ENCODE measurements at regions of chr1 and their contacts with region 1.

Region 1: DNA sequence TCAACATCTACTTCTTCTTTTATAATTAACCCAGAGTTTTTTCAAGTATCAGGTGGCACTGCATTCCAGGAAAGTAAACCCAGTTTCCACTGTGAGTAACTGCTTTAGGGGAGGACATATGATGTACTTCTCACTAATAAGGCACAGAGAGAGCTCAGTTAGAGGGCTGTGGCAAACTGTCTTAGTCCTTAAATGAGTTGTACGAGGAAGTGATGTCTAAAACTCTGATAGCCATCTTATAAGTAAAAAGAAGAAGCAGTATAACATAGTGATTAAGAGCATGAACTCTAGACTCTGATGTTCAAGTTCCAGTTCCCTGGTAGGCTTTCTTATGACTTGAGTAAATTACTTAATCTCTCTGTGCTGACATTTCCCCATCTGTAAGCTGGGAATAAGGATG is 58.7 kb upstream of the PTGS2 start:
- DNase-seq: peak; percentile 10
- H3K4me3 Mint-ChIP-seq: no peak overlapping the region
- H3K27ac Mint-ChIP-seq: peak overlapping the region; percentile 26
- H3K4me1 Mint-ChIP-seq: peaks cover 21% of the 10 kb centered on the region
- H3K27me3 Mint-ChIP-seq: peaks cover 2% of the 10 kb centered on the region

Region 2: DNA sequence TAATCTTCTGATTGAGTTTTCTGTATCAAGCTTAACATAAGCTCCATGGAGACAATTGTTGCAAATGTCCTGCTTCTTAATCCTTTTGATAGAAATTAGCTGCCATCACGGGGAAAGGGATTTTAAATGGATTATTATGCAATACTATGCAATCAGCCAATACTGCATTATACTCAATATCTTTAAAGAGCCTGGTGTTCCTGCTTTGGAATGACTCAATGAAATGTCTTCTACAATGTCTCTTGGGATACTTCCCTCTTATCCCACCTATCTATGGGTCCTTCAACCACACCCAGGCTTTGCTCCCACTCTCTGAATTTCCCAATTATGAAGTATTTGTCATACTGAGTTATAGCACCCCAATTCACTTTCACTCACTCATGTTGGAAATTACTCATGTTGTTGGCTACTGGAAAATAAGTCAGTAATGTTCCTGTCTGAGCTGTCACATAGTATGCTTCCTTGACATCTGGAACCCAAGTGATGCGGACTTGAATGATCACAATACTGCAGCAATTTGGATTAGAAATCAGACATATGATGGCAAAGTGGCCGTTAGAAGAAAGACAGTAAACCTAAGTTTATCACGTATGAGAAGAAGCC is 448.9 kb before region 1 on chr1:
- CTCF ChIA-PET with region 1: no interaction called
- POLR2A ChIA-PET with region 1: no interaction called
- intact Hi-C with region 1: loop called (anchors 5 kb)
- DNase-seq: no peak
- H3K4me3 Mint-ChIP-seq: peak overlapping the region; percentile 24
- H3K27ac Mint-ChIP-seq: peak overlapping the region; percentile 92
- H3K4me1 Mint-ChIP-seq: peaks cover 65% of the 10 kb centered on the region
- H3K27me3 Mint-ChIP-seq: peaks cover 2% of the 10 kb centered on the region

Region 3: GRCh38 chr1:186442651-186443114 is 296.2 kb before region 1 on chr1:
- CTCF ChIA-PET with region 1: no interaction called
- POLR2A ChIA-PET with region 1: no interaction called
- intact Hi-C with region 1: loop called (anchors 2 kb)
- DNase-seq: no peak
- H3K4me3 Mint-ChIP-seq: no peak overlapping the region
- H3K27ac Mint-ChIP-seq: no peak overlapping the region
- H3K4me1 Mint-ChIP-seq: peaks cover 15% of the 10 kb centered on the region
- H3K27me3 Mint-ChIP-seq: no peaks in the 10 kb centered on the region

Region 4: DNA sequence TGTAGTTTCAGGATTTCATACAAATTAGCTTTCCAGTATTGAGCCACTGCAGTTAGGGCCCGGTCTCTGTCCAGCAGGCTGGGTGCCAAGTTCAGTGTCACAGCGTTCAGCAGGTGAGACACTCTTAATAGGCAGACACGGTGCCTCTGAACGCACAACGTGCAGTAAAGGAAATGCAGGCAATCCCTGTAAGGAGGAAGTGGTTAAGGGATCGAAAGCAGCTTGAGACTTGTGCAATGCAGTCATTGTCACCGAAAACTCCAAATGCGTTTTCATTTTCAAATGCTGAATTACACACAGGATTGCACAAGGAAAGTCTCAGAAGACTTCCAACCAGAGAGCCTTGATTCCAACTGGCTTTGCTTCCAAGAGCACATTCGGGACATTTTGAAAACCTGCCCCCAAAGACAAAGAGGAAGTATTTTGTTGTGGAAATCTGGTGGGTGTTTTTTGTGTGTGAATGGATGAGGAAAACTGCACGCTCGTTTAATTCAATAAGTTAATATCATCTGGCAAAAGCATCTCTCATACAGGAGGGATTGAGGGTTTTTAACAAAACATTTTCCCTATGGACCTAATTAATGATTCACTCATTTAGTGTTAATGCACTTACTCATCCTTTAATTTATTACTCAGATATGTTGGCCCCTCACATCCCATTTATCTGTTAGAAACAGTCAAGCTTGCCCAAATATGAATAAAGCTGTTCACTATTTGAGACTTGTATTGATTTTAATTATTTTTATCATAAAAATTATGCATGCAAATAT is 120.3 kb before region 1 on chr1:
- CTCF ChIA-PET with region 1: no interaction called
- POLR2A ChIA-PET with region 1: no interaction called
- intact Hi-C with region 1: loop called (anchors 1 kb)
- DNase-seq: peak; percentile 60
- H3K4me3 Mint-ChIP-seq: no peak overlapping the region
- H3K27ac Mint-ChIP-seq: no peak overlapping the region
- H3K4me1 Mint-ChIP-seq: peaks cover 33% of the 10 kb centered on the region
- H3K27me3 Mint-ChIP-seq: peaks cover 1% of the 10 kb centered on the region

Region 5: GRCh38 chr1:186899577-186899976 is 160.7 kb after region 1 on chr1:
- CTCF ChIA-PET with region 1: no interaction called
- POLR2A ChIA-PET with region 1: no interaction called
- intact Hi-C with region 1: loop called (anchors 1 kb)
- DNase-seq: no peak
- H3K4me3 Mint-ChIP-seq: no peak overlapping the region
- H3K27ac Mint-ChIP-seq: peak overlapping the region; percentile 31
- H3K4me1 Mint-ChIP-seq: peaks cover 5% of the 10 kb centered on the region
- H3K27me3 Mint-ChIP-seq: peaks cover 4% of the 10 kb centered on the region